Right ventricle myocardium inferior (tissue), 1 donor: ENCODE measurements at regions of chr20 and their contacts with region 1.

Region 1: GRCh38 chr20:53216856-53217576 is 244.9 kb downstream of the TSHZ2 start:
- DNase-seq: peak; percentile 90
- ATAC-seq: peak; percentile 72

Region 2: GRCh38 chr20:52312132-52312729 is 904.8 kb before region 1 on chr20:
- intact Hi-C with region 1: loop called (anchors 10 kb)
- DNase-seq: no peak
- ATAC-seq: peak; percentile 56

Region 3: GRCh38 chr20:52637201-52637600 is 579.8 kb before region 1 on chr20:
- intact Hi-C with region 1: no loop called
- DNase-seq: no peak
- ATAC-seq: no peak